Pancreas (tissue), 10 donors: ENCODE measurements at regions of chr3 and their contacts with region 1.

Region 1: DNA sequence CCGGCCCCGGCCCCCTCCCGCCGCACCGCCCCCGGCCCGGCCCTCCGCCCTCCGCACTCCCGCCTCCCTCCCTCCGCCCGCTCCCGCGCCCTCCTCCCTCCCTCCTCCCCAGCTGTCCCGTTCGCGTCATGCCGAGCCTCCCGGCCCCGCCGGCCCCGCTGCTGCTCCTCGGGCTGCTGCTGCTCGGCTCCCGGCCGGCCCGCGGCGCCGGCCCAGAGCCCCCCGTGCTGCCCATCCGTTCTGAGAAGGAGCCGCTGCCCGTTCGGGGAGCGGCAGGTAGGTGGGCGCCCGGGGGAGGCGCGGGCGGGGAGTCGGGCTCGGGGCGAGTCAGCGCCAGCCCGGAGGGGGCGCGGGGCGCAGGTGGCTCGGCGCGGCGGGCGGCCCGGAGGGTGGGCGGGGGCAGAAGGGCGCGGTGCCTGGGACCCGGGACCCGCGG is 355 bp downstream of the CHRD start:
- DNase-seq: peak; percentile 69 to 92 (median 83)
- ATAC-seq: peak; percentile 61 to 83 (median 74)
- H3K4me3 ChIP-seq: peak overlapping the region; percentile 21 to 52 (median 39)
- H3K27ac ChIP-seq: no peak overlapping the region
- H3K4me1 ChIP-seq: peaks cover 7 to 15% (median 10%) of the 10 kb centered on the region in 3 donors
- H3K27me3 ChIP-seq: no peaks in the 10 kb centered on the region
- CTCF ChIP-seq: no peak

Region 2: GRCh38 chr3:184531626-184532280 is 151.5 kb after region 1 on chr3:
- intact Hi-C with region 1: loop called in 2 of 3 experiments (anchors 5 to 10 kb)
- DNase-seq: peak in 1 of 6 donors; percentile 34
- ATAC-seq: peak in 1 of 4 donors; percentile 47
- H3K4me3 ChIP-seq: no peak overlapping the region
- H3K27ac ChIP-seq: no peak overlapping the region
- H3K4me1 ChIP-seq: no peaks in the 10 kb centered on the region
- H3K27me3 ChIP-seq: no peaks in the 10 kb centered on the region
- CTCF ChIP-seq: no peak